ENCODE measurements at regions of chr16 and their contacts with region 1.

Region 1: GRCh38 chr16:74973153-74973703 is 11.7 kb downstream of the WDR59 start:
- DNase-seq: no peak
- H3K4me3 ChIP-seq: no peak overlapping the region
- H3K27ac ChIP-seq: no peak overlapping the region
- H3K4me1 ChIP-seq: no peaks in the 10 kb centered on the region
- H3K27me3 ChIP-seq: no peaks in the 10 kb centered on the region
- CTCF ChIP-seq: no peak

Region 2: GRCh38 chr16:74874912-74875546 is 98.2 kb before region 1 on chr16:
- CTCF ChIA-PET with region 1: no interaction called
- POLR2A ChIA-PET with region 1: no interaction called
- intact Hi-C with region 1: no loop called
- DNase-seq: peak in 1 of 2 experiments; percentile 76
- H3K4me3 ChIP-seq: no peak overlapping the region
- H3K27ac ChIP-seq: no peak overlapping the region
- H3K4me1 ChIP-seq: no peaks in the 10 kb centered on the region
- H3K27me3 ChIP-seq: no peaks in the 10 kb centered on the region
- CTCF ChIP-seq: no peak

Region 3: GRCh38 chr16:74942977-74943918 is 30.0 kb before region 1 on chr16:
- CTCF ChIA-PET with region 1: no interaction called
- POLR2A ChIA-PET with region 1: interaction called, 13 read pairs
- intact Hi-C with region 1: no loop called
- DNase-seq: no peak
- H3K4me3 ChIP-seq: no peak overlapping the region
- H3K27ac ChIP-seq: no peak overlapping the region
- H3K4me1 ChIP-seq: peaks cover 1% of the 10 kb centered on the region; the same call in 1 of the 2 replicates
- H3K27me3 ChIP-seq: no peaks in the 10 kb centered on the region
- CTCF ChIP-seq: no peak

Measured in PC-9 (cell line).